Right ventricle myocardium inferior (tissue), 1 donor: ENCODE measurements at regions of chr20 and their contacts with region 1.

Region 1: GRCh38 chr20:45771182-45771759 is 20.4 kb downstream of the WFDC3 start:
- DNase-seq: no peak
- ATAC-seq: peak; percentile 73

Region 2: DNA sequence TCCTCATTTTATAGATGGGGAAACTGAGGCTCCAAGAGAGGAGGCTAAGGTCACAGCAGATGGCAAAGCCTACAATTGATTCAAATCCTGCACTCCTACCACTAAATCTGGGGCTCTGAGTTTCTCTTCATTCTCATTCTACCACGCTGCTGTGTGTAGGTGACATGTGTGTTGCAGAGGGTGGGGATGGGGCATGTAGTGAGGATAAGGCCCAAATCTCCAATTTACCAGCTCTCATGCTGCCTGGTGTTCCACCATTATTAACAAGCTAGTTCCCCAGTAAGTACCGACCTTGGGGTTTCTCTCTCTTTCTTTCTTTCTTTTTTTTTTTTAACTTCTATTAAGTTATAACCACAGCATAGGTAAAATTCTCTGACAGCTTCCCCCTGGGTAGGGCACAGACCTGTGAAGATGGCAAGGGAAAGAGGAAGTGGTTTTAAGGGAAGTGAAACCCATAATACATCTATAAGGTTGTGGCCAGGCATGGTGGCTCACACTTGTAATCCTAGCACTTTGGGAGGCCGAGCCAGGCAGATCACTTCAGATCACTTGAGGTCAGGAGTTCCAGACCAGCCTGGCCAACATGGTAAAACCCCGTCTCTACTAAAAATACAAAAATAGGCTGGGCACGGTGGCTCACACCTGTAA is 450.2 kb before region 1 on chr20:
- intact Hi-C with region 1: loop called (anchors 2 kb)
- DNase-seq: no peak
- ATAC-seq: no peak